SK-N-SH (cell line): ENCODE measurements at regions of chr14 and their contacts with region 1.

Region 1: GRCh38 chr14:99683619-99684355 is at the start of gene CYP46A1:
- DNase-seq: peak; percentile 99
- H3K4me3 ChIP-seq: peak within 1 kb of the TSS; percentile 81 to 96
- H3K27ac ChIP-seq: peak within 1 kb of the TSS; percentile 62 to 83
- H3K4me1 ChIP-seq: peaks cover 0 to 11% of the 10 kb centered on the region in 2 experiments; a peak in 1 of 4 replicates
- H3K27me3 ChIP-seq: no peaks in the 10 kb centered on the region; the same call in 1 of the 2 replicates
- CTCF ChIP-seq: no peak
- EP300 ChIP-seq: no peak
- RAD21 ChIP-seq: no peak
- polyA plus RNA-seq, gene CYP46A1: 0.18 and 0.30 TPM in 2 replicates

Region 2: DNA sequence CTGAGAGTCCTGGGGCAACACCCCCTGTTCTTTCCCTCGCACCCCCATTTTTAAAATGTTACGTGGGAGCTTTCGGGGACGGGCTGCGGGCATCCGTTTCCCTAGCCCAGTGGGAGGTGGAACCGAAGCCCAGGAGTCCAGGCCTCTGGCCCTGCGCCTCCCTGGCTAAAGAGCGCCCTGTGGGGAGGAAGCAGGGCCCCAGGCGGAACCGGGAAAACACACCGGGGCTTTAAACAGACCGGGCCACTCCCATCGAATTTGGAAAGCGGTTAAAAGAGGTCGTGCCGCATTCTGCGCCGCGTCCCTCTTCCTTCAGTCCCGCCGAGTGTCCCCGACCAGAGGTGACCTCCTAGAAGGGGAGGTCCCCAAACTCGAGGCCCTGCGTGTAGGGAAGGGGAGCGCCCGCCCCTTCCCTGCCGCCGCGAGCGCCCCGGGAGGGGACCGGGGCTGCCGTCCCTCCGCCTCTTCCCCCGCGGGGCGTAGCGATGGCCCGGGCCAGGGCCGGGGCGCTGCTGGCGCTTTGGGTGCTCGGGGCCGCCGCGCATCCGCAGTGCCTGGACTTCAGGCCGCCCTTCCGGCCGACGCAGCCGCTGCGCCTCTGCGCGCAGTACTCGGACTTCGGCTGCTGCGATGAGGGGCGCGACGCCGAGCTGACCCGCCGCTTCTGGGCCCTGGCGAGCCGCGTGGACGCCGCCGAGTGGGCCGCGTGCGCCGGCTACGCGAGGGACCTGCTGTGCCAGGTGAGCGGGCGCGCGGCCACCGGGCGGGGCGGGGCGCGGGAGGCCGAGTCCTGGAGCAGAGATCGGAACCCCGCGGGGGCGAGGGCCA is 38.9 kb before region 1 on chr14 and contains the start of gene HHIPL1:
- CTCF ChIA-PET with region 1: no interaction called
- POLR2A ChIA-PET with region 1: no interaction called
- DNase-seq: peak; percentile 87
- H3K4me3 ChIP-seq: peak within 1 kb of the TSS in 1 of 2 experiments; percentile 13; a peak in 1 of 4 replicates
- H3K27ac ChIP-seq: no peak within 1 kb of the TSS
- H3K4me1 ChIP-seq: no peaks in the 10 kb centered on the region; a peak in 1 of 4 replicates
- H3K27me3 ChIP-seq: no peaks in the 10 kb centered on the region
- CTCF ChIP-seq: no peak
- EP300 ChIP-seq: no peak
- RAD21 ChIP-seq: no peak
- polyA plus RNA-seq, gene HHIPL1: 0.02 TPM in 2 replicates

Region 3: GRCh38 chr14:99672506-99673304 is 11.1 kb before region 1 on chr14:
- CTCF ChIA-PET with region 1: interaction called, 20 read pairs
- POLR2A ChIA-PET with region 1: no interaction called
- DNase-seq: no peak
- H3K4me3 ChIP-seq: no peak overlapping the region
- H3K27ac ChIP-seq: no peak overlapping the region
- H3K4me1 ChIP-seq: peaks cover 3 to 7% of the 10 kb centered on the region in 2 experiments; a peak in 2 of 4 replicates
- H3K27me3 ChIP-seq: 0 out of 2 replicates have a peak, but pooled peaks cover 7% of the 10 kb centered on the region
- CTCF ChIP-seq: no peak
- EP300 ChIP-seq: no peak
- RAD21 ChIP-seq: no peak

Region 4: DNA sequence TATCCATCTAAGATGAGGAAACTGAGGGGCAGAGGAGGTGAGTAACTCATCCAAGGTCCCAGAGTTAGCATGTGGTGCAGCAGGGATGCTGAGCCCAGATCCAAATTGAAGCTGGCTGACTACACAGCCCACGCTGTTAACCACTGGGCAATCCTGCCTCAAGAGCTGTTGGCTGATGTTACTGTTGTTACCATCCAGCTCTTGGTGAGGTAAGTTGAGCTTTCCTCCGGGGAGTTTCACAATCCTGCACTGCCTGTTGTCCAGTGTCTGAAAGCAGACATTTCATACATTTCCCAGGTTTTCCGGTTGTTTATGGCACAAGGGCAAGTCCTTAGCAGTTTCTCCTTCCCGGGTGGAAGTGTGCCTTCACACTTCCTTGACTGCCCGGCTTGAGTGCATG is 14.9 kb after region 1 on chr14:
- CTCF ChIA-PET with region 1: interaction called, 19 read pairs
- POLR2A ChIA-PET with region 1: no interaction called
- DNase-seq: no peak
- H3K4me3 ChIP-seq: no peak overlapping the region
- H3K27ac ChIP-seq: no peak overlapping the region
- H3K4me1 ChIP-seq: no peaks in the 10 kb centered on the region
- H3K27me3 ChIP-seq: no peaks in the 10 kb centered on the region
- CTCF ChIP-seq: no peak
- EP300 ChIP-seq: no peak
- RAD21 ChIP-seq: no peak

Region 5: DNA sequence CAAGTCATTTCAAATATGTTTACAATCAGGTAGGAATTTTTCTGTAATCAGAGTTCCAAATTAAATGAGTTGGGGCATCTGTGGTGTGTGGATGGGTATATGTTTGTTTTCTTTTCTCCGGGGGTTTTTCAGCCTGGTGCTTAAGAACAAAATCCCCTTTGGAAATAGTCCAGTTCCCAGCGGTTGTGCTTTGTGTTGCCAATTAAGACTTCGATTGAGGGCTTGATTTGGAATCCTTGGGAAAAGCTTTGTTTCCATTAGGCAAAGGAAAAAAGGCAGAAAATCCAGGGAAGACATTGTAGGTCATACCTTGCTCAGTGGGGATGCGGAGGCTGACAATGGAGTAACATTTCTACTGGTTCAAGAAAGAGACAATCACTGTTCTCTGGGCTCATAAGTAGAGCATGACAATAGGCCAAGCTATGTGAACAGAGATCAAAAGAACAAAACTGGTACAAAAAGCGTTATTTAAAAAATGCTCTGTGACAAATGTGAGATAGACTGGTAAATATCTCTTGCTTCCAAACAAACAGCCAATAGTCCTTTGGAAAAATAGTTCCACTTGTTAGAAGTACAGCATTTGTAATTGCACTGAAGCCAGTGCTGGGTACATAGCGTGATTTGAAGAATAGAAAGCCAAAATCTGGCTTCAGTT is 189.1 kb after region 1 on chr14:
- CTCF ChIA-PET with region 1: interaction called, 17 read pairs
- POLR2A ChIA-PET with region 1: no interaction called
- DNase-seq: peak; percentile 38
- H3K4me3 ChIP-seq: no peak overlapping the region
- H3K27ac ChIP-seq: peak overlapping the region in 1 of 2 experiments; percentile 58; a peak in 2 of 4 replicates
- H3K4me1 ChIP-seq: peaks cover 0 to 39% of the 10 kb centered on the region in 2 experiments; a peak in 2 of 4 replicates
- H3K27me3 ChIP-seq: no peaks in the 10 kb centered on the region
- CTCF ChIP-seq: no peak
- EP300 ChIP-seq: peak in 1 of 2 experiments; percentile 35; a peak in 1 of 4 replicates
- RAD21 ChIP-seq: no peak

Region 6: GRCh38 chr14:99879401-99880295 is 195.9 kb after region 1 on chr14:
- CTCF ChIA-PET with region 1: interaction called, 24 read pairs
- POLR2A ChIA-PET with region 1: no interaction called
- DNase-seq: no peak
- H3K4me3 ChIP-seq: no peak overlapping the region; a peak in 1 of 4 replicates
- H3K27ac ChIP-seq: peak overlapping the region; percentile 55 to 83
- H3K4me1 ChIP-seq: peaks cover 15 to 30% of the 10 kb centered on the region in 2 experiments
- H3K27me3 ChIP-seq: no peaks in the 10 kb centered on the region
- CTCF ChIP-seq: no peak
- EP300 ChIP-seq: 0 out of 4 replicates have a peak, but pooled peaks of 1 of the 2 experiments have one; percentile 9
- RAD21 ChIP-seq: no peak

Region 7: DNA sequence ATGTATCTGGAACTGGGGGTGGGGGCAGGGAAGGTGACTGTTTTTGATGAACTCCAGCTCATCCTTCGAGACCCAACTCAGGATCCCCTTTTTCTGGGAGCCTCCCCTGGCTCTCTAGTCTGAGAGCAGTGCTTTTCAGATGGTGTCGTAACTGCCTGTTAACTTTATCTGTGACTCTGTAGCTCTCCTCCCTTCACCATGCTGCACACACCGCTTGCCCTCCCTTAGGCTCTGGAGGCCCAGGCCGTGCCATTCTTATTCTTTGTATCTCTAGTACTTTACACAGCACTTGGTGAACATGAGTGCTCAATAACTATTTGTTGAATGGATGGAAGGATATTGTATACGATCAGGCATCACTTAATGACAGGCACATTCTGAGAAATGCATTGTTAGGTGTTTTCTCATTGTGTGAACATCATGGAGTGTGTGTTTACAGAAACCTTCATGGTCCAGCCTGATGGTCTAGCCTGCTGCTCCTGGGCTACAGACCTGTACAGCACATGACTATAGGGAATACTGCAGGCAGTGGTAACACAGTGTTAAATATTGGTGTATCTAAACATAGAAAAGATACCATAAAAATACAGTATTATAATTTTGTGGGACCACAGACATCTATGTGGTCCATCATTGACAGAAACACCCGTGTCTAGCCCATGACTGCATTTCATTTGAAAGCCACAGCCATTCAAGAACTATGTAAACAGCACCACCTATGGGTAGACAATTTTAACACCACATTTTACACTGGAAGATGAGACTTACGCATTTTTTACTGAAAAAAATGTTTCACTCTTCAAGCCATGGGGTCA is 201.3 kb after region 1 on chr14:
- CTCF ChIA-PET with region 1: interaction called, 24 read pairs
- POLR2A ChIA-PET with region 1: no interaction called
- DNase-seq: peak; percentile 69
- H3K4me3 ChIP-seq: no peak overlapping the region; a peak in 1 of 4 replicates
- H3K27ac ChIP-seq: no peak overlapping the region
- H3K4me1 ChIP-seq: peaks cover 4 to 5% of the 10 kb centered on the region in 2 experiments; a peak in 3 of 4 replicates
- H3K27me3 ChIP-seq: no peaks in the 10 kb centered on the region
- CTCF ChIP-seq: peak; percentile 89
- EP300 ChIP-seq: no peak
- RAD21 ChIP-seq: peak; percentile 96

Region 8: GRCh38 chr14:99899578-99900178 is 215.9 kb after region 1 on chr14:
- CTCF ChIA-PET with region 1: interaction called, 26 read pairs
- POLR2A ChIA-PET with region 1: no interaction called
- DNase-seq: peak; percentile 28
- H3K4me3 ChIP-seq: no peak overlapping the region; a peak in 1 of 4 replicates
- H3K27ac ChIP-seq: no peak overlapping the region
- H3K4me1 ChIP-seq: no peaks in the 10 kb centered on the region; a peak in 1 of 4 replicates
- H3K27me3 ChIP-seq: no peaks in the 10 kb centered on the region
- CTCF ChIP-seq: peak; percentile 72
- EP300 ChIP-seq: no peak
- RAD21 ChIP-seq: peak; percentile 13; the same call in 1 of the 2 replicates